CD8-positive, alpha-beta T cell (primary cell): ENCODE measurements at regions of chr21 and their contacts with region 1.

Region 1: GRCh38 chr21:33360881-33361602 is 36.3 kb downstream of the IFNAR1 start:
- DNase-seq: peak; percentile 76 to 94 (median 85)
- ATAC-seq: peak; percentile 69
- H3K4me3 ChIP-seq: peak overlapping the region; percentile 50 to 61
- H3K4me3 Mint-ChIP-seq: peak overlapping the region; percentile 84
- H3K27ac ChIP-seq: peak overlapping the region; percentile 61 to 71
- H3K27ac Mint-ChIP-seq: peak overlapping the region; percentile 91
- H3K4me1 ChIP-seq: peaks cover 15% of the 10 kb centered on the region
- H3K4me1 Mint-ChIP-seq: peaks cover 19% of the 10 kb centered on the region
- H3K27me3 ChIP-seq: peaks cover 0 to 3% of the 10 kb centered on the region in 2 experiments
- H3K27me3 Mint-ChIP-seq: no peaks in the 10 kb centered on the region
- CTCF ChIP-seq: peak; percentile 93

Region 2: DNA sequence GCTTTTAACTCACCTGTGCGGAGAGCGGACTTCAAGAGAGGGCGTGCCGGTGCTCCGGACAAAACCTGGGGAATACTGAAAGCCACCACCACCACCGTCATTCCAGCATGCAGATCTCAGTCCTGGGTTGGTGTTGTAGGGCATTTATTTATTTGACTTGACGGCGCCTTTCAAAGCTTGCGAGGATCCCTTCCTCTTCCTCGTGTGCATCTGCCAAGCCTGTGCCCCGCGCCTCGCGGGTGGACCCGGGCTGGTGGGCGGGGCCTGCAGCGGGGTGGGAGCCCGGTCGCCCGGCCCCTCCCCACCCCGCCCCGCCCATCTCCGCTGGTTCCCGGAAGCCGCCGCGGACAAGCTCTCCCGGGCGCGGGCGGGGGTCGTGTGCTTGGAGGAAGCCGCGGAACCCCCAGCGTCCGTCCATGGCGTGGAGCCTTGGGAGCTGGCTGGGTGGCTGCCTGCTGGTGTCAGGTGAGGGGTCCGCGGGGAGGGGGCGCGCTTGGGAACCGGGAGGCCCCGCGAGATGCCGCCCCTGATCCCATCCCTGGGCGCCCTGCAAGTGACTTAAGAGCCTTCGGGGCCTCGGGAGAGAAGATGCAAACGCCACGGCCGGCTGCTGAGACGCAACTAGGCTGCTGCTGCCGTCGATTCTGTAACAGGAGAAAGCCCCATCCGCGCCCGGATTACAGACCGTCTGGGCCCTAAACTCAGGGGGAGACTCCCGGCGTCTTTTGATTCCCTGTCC is 94.8 kb before region 1 on chr21 and contains the start of gene IL10RB:
- CTCF ChIA-PET with region 1: interaction called, 10 read pairs
- POLR2A ChIA-PET with region 1: interaction called, 14 read pairs
- intact Hi-C with region 1: loop called in 1 of 2 experiments (anchors 5 kb)
- DNase-seq: peak; percentile 21 to 88 (median 72)
- ATAC-seq: peak; percentile 85
- H3K4me3 ChIP-seq: peak within 1 kb of the TSS; percentile 84 to 89
- H3K4me3 Mint-ChIP-seq: peak within 1 kb of the TSS; percentile 93
- H3K27ac ChIP-seq: peak within 1 kb of the TSS; percentile 70 to 75
- H3K27ac Mint-ChIP-seq: peak within 1 kb of the TSS; percentile 95
- H3K4me1 ChIP-seq: peaks cover 46% of the 10 kb centered on the region
- H3K4me1 Mint-ChIP-seq: peaks cover 66% of the 10 kb centered on the region
- H3K27me3 ChIP-seq: no peaks in the 10 kb centered on the region
- H3K27me3 Mint-ChIP-seq: no peaks in the 10 kb centered on the region
- CTCF ChIP-seq: no peak
- total RNA-seq, gene IL10RB: 7.4 to 8.2 TPM

Region 3: GRCh38 chr21:33324291-33325221 is 36.5 kb before region 1 on chr21 and contains the start of gene IFNAR1:
- CTCF ChIA-PET with region 1: interaction called, 15 read pairs
- POLR2A ChIA-PET with region 1: interaction called, 31 read pairs
- intact Hi-C with region 1: loop called (anchors 1 to 2 kb)
- DNase-seq: peak; percentile 98 to 100 (median 99)
- ATAC-seq: peak; percentile 92
- H3K4me3 ChIP-seq: peak within 1 kb of the TSS; percentile 80 to 92
- H3K4me3 Mint-ChIP-seq: no peak within 1 kb of the TSS
- H3K27ac ChIP-seq: peak within 1 kb of the TSS; percentile 88 to 92
- H3K27ac Mint-ChIP-seq: no peak within 1 kb of the TSS
- H3K4me1 ChIP-seq: peaks cover 31% of the 10 kb centered on the region
- H3K4me1 Mint-ChIP-seq: peaks cover 30% of the 10 kb centered on the region
- H3K27me3 ChIP-seq: no peaks in the 10 kb centered on the region
- H3K27me3 Mint-ChIP-seq: no peaks in the 10 kb centered on the region
- CTCF ChIP-seq: no peak
- total RNA-seq, gene IFNAR1: 15.1 to 18.6 TPM

Region 4: DNA sequence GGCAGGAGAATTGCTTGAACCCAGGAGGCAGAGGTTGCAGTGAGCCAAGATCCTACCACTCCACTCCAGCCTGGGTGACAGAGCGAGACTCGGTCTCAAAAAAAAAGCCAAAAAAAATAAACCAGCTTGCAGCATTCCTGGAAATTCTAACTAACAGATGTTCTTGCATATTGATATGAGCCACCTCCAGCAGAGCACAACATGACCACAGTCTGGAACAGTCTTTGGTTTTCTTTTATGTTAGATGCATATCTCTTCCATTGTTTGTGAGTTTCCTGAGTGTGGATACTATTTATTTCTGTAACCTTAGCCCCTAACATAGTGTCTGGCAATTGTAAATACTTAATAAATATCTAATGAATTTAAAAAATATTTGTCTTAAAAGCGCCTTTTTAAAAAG is 12.3 kb before region 1 on chr21:
- CTCF ChIA-PET with region 1: interaction called, 47 read pairs
- POLR2A ChIA-PET with region 1: interaction called, 11 read pairs
- intact Hi-C with region 1: no loop called
- DNase-seq: no peak
- ATAC-seq: no peak
- H3K4me3 ChIP-seq: no peak overlapping the region
- H3K4me3 Mint-ChIP-seq: no peak overlapping the region
- H3K27ac ChIP-seq: no peak overlapping the region
- H3K27ac Mint-ChIP-seq: no peak overlapping the region
- H3K4me1 ChIP-seq: peaks cover 15% of the 10 kb centered on the region
- H3K4me1 Mint-ChIP-seq: peaks cover 16% of the 10 kb centered on the region
- H3K27me3 ChIP-seq: no peaks in the 10 kb centered on the region
- H3K27me3 Mint-ChIP-seq: no peaks in the 10 kb centered on the region
- CTCF ChIP-seq: no peak

Region 5: GRCh38 chr21:33380483-33380998 is 19.5 kb after region 1 on chr21:
- CTCF ChIA-PET with region 1: interaction called, 22 read pairs
- POLR2A ChIA-PET with region 1: interaction called, 17 read pairs
- intact Hi-C with region 1: loop called (anchors 1 to 2 kb)
- DNase-seq: peak; percentile 53 to 88 (median 82)
- ATAC-seq: peak; percentile 72
- H3K4me3 ChIP-seq: peak overlapping the region in 1 of 2 experiments; percentile 17
- H3K4me3 Mint-ChIP-seq: peak overlapping the region; percentile 60
- H3K27ac ChIP-seq: peak overlapping the region; percentile 7 to 49
- H3K27ac Mint-ChIP-seq: peak overlapping the region; percentile 93
- H3K4me1 ChIP-seq: peaks cover 61% of the 10 kb centered on the region
- H3K4me1 Mint-ChIP-seq: peaks cover 60% of the 10 kb centered on the region
- H3K27me3 ChIP-seq: peaks cover 0 to 18% of the 10 kb centered on the region in 2 experiments
- H3K27me3 Mint-ChIP-seq: peaks cover 3% of the 10 kb centered on the region
- CTCF ChIP-seq: no peak

Region 6: GRCh38 chr21:33403779-33404585 is 42.9 kb after region 1 on chr21:
- CTCF ChIA-PET with region 1: interaction called, 5 read pairs
- POLR2A ChIA-PET with region 1: interaction called, 22 read pairs
- intact Hi-C with region 1: loop called (anchors 1 to 2 kb)
- DNase-seq: peak in 4 of 9 experiments; percentile 16 to 68 (median 34)
- ATAC-seq: peak; percentile 17
- H3K4me3 ChIP-seq: peak overlapping the region; percentile 55 to 78
- H3K4me3 Mint-ChIP-seq: peak overlapping the region; percentile 84
- H3K27ac ChIP-seq: peak overlapping the region in 1 of 2 experiments; percentile 60
- H3K27ac Mint-ChIP-seq: peak overlapping the region; percentile 86
- H3K4me1 ChIP-seq: peaks cover 37% of the 10 kb centered on the region
- H3K4me1 Mint-ChIP-seq: peaks cover 54% of the 10 kb centered on the region
- H3K27me3 ChIP-seq: peaks cover 0 to 30% of the 10 kb centered on the region in 2 experiments
- H3K27me3 Mint-ChIP-seq: no peaks in the 10 kb centered on the region
- CTCF ChIP-seq: no peak

Region 7: DNA sequence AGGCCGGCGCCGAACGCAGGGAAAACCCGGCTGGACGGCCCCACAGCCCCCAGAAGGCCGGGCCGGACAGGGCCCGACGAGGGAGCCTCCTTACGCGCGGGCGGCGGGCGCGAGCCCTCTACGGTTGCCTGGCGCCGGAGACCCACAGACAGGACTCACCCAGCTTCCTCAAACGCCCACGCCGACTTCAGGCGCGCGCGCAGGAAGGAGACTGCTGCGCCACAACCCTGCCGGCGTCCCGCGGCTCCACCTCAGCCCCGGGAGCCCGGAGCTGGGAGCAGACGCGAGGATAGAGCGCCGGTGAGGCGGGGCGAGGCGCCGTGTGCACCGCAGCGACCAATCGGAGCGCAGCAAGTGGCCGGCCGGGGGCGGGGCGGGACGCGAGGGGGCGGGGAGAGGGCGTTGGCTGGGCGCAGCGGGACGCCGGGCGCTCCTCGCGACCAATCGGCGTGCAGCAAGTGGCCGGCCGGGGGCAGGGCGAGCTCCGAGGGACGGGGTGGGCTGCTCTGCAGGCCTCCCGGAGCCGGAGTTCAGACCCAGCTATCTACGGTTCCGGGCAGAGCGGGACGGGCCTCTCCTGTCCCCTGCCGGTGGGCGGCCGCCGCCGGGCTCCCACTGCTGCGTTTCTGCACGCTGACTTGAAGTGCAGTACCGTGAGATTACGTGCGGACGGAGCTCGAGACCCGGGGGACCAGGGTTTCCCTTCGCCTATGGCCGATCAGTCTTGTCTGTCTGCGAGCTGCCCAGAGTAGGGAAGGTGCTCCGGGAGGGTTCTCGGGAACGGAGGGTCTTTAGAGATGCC is 118.8 kb after region 1 on chr21 and contains the start of gene TMEM50B:
- CTCF ChIA-PET with region 1: interaction called, 4 read pairs
- POLR2A ChIA-PET with region 1: interaction called, 19 read pairs
- intact Hi-C with region 1: no loop called
- DNase-seq: peak; percentile 94 to 98 (median 95)
- ATAC-seq: peak; percentile 87
- H3K4me3 ChIP-seq: peak within 1 kb of the TSS; percentile 79 to 88
- H3K4me3 Mint-ChIP-seq: peak within 1 kb of the TSS; percentile 89
- H3K27ac ChIP-seq: peak within 1 kb of the TSS; percentile 83 to 87
- H3K27ac Mint-ChIP-seq: peak within 1 kb of the TSS; percentile 96
- H3K4me1 ChIP-seq: peaks cover 13% of the 10 kb centered on the region
- H3K4me1 Mint-ChIP-seq: peaks cover 28% of the 10 kb centered on the region
- H3K27me3 ChIP-seq: no peaks in the 10 kb centered on the region
- H3K27me3 Mint-ChIP-seq: no peaks in the 10 kb centered on the region
- CTCF ChIP-seq: peak; percentile 31
- total RNA-seq, gene TMEM50B: 32.6 to 34.0 TPM